HepG2 (cell line): ENCODE measurements at regions of chr10 and their contacts with region 1.

Region 1: DNA sequence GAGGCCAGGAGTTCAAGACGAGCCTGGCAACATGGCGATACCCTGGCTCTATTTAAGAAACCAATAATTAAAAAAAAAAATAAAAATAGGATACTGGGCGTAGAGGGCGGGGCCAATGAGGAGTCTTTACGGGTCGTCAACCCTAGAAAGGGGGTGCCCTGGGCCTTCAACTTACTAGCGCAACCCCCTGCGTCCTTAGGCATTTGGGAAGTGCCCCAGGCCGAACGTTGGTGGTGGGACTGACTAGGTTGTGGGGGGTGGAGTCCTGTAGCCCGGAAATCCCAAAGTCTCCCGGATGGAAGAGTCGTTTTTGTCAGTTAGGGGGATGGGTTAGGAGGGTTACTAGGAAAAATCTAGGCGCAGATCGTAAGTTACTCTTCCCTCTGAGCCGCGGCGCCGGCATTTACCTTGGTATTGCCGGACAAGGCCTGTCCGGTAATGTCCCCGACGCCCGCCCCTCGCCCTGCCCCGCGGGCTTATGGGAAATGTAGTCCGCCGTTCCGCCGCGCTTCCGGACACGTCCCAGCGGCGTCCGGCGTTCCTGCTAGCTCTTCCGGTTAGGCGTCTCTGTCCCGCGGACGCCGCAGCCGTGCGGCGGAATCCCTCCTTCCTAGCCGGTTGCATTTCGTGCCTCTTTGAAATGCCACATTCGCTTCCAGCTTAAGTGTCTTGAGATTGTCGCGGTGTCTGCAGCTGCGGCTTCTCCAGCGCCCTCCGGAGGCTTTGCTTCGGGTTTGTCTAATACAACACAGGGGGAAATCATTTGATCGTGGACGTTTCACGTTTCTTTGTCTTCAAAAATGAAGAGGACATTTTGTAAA is 1.3 kb upstream of the ACBD5 start:
- DNase-seq: peak; percentile 89
- ATAC-seq: peak; percentile 83
- H3K4me3 ChIP-seq: peak overlapping the region; percentile 86 to 95 (median 92)
- H3K27ac ChIP-seq: peak overlapping the region; percentile 97
- H3K4me1 ChIP-seq: peaks cover 29% of the 10 kb centered on the region
- H3K27me3 ChIP-seq: no peaks in the 10 kb centered on the region
- CTCF ChIP-seq: peak; percentile 43
- EP300 ChIP-seq: peak; percentile 51 to 59; a peak in 2 of 4 replicates
- POLR2A ChIP-seq: peak; percentile 80 to 93
- RAD21 ChIP-seq: no peak

Region 2: DNA sequence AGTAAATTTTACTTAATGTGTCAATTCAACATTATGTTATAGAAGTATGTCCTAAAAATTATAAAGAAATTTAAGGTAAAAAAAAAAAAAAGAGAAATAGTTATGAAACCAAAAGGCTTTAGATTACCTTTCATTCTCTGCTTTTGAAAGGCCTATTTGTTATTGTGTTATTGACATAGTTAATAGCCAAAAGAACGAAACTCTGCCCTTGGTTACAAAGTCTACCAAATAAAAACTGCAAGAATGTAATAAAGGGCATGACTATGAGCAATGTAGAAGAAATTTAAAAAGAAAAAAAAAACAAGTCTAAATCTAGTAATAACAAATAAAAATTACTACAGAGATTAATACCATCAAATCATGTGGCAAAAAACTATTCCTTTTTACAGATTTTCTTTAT is 11.8 kb before region 1 on chr10:
- CTCF ChIA-PET with region 1: no interaction called
- POLR2A ChIA-PET with region 1: no interaction called
- in situ Hi-C with region 1: no loop called
- intact Hi-C with region 1: no loop called
- DNase-seq: no peak
- ATAC-seq: no peak
- H3K4me3 ChIP-seq: no peak overlapping the region
- H3K27ac ChIP-seq: no peak overlapping the region
- H3K4me1 ChIP-seq: peaks cover 17% of the 10 kb centered on the region
- H3K27me3 ChIP-seq: no peaks in the 10 kb centered on the region
- CTCF ChIP-seq: no peak
- EP300 ChIP-seq: no peak
- POLR2A ChIP-seq: no peak
- RAD21 ChIP-seq: no peak

Region 3: GRCh38 chr10:27504007-27504807 is 262.3 kb after region 1 on chr10 and contains the start of gene RAB18:
- CTCF ChIA-PET with region 1: no interaction called
- POLR2A ChIA-PET with region 1: interaction called, 3 read pairs
- in situ Hi-C with region 1: no loop called
- intact Hi-C with region 1: loop called (anchors 10 kb)
- DNase-seq: peak; percentile 91
- ATAC-seq: peak; percentile 96
- H3K4me3 ChIP-seq: peak within 1 kb of the TSS; percentile 82 to 97 (median 90)
- H3K27ac ChIP-seq: peak within 1 kb of the TSS; percentile 74
- H3K4me1 ChIP-seq: peaks cover 27% of the 10 kb centered on the region
- H3K27me3 ChIP-seq: no peaks in the 10 kb centered on the region
- CTCF ChIP-seq: 0 out of 2 replicates have a peak, but pooled peaks have one; percentile 39
- EP300 ChIP-seq: peak in 1 of 2 experiments; percentile 60; a peak in 1 of 4 replicates
- POLR2A ChIP-seq: peak; percentile 92 to 94
- RAD21 ChIP-seq: 0 out of 2 replicates have a peak, but pooled peaks have one; percentile 12
- total RNA-seq, gene RAB18: 69.1 and 114 TPM in 2 replicates